H1 (cell line): ENCODE measurements at regions of chr14 and their contacts with region 1.

Region 1: GRCh38 chr14:96275177-96276112 is 19.4 kb downstream of the BDKRB1 start:
- DNase-seq: peak in 1 of 2 experiments; percentile 92
- H3K4me3 ChIP-seq: no peak overlapping the region
- H3K27ac ChIP-seq: no peak overlapping the region
- H3K4me1 ChIP-seq: peaks cover 0 to 6% (median 2%) of the 10 kb centered on the region in 4 experiments; a peak in 2 of 7 replicates
- H3K27me3 ChIP-seq: no peaks in the 10 kb centered on the region
- CTCF ChIP-seq: peak; percentile 91 to 93 (median 93)
- EP300 ChIP-seq: no peak
- POLR2A ChIP-seq: no peak
- RAD21 ChIP-seq: peak; percentile 94

Region 2: GRCh38 chr14:96204151-96205058 is 71.0 kb before region 1 on chr14 and contains the start of gene BDKRB2:
- CTCF ChIA-PET with region 1: no interaction called
- POLR2A ChIA-PET with region 1: no interaction called
- DNase-seq: peak; percentile 17 to 69
- H3K4me3 ChIP-seq: peak within 1 kb of the TSS; percentile 25 to 63 (median 44)
- H3K27ac ChIP-seq: no peak within 1 kb of the TSS
- H3K4me1 ChIP-seq: peaks cover 0 to 22% (median 5%) of the 10 kb centered on the region in 4 experiments; a peak in 5 of 7 replicates
- H3K27me3 ChIP-seq: peaks cover 0 to 22% (median 19%) of the 10 kb centered on the region in 4 experiments; a peak in 6 of 7 replicates
- CTCF ChIP-seq: no peak
- EP300 ChIP-seq: no peak
- POLR2A ChIP-seq: no peak
- RAD21 ChIP-seq: no peak
- total RNA-seq, gene BDKRB2: 0.13 TPM in 2 replicates

Region 3: GRCh38 chr14:96246535-96246839 is 29.0 kb before region 1 on chr14:
- CTCF ChIA-PET with region 1: interaction called, 11 read pairs
- POLR2A ChIA-PET with region 1: no interaction called
- DNase-seq: no peak
- H3K4me3 ChIP-seq: no peak overlapping the region
- H3K27ac ChIP-seq: no peak overlapping the region
- H3K4me1 ChIP-seq: peaks cover 0 to 4% (median 2%) of the 10 kb centered on the region in 4 experiments; a peak in 2 of 7 replicates
- H3K27me3 ChIP-seq: no peaks in the 10 kb centered on the region
- CTCF ChIP-seq: no peak
- EP300 ChIP-seq: no peak
- POLR2A ChIP-seq: no peak
- RAD21 ChIP-seq: no peak

Region 4: GRCh38 chr14:96252999-96253539 is 22.4 kb before region 1 on chr14:
- CTCF ChIA-PET with region 1: interaction called, 11 read pairs
- POLR2A ChIA-PET with region 1: no interaction called
- DNase-seq: peak in 1 of 2 experiments; percentile 21
- H3K4me3 ChIP-seq: no peak overlapping the region
- H3K27ac ChIP-seq: no peak overlapping the region
- H3K4me1 ChIP-seq: peaks cover 0 to 4% (median 2%) of the 10 kb centered on the region in 4 experiments; a peak in 3 of 7 replicates
- H3K27me3 ChIP-seq: no peaks in the 10 kb centered on the region
- CTCF ChIP-seq: no peak
- EP300 ChIP-seq: no peak
- POLR2A ChIP-seq: no peak
- RAD21 ChIP-seq: no peak

Region 5: DNA sequence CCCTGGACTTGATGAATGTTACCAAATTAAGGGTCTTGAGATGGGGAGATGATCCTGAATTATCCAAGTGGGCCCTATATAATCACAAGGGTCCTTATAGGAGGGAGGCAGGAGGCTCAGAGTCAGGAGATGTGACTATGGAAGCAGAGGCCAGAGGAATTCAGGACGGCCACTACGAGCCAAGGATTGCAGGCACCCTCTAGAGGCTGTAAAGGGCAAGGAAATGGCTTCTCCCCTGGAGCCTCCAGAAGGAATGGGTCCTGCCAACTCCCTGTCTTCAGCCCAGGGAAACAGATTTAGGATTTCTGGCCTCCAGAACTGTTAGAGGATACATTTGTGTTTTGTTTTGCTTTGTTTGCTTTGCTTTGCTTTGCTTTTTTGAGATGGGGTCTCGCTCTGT is 10.6 kb before region 1 on chr14:
- CTCF ChIA-PET with region 1: interaction called, 46 read pairs
- POLR2A ChIA-PET with region 1: no interaction called
- DNase-seq: no peak
- H3K4me3 ChIP-seq: no peak overlapping the region
- H3K27ac ChIP-seq: no peak overlapping the region
- H3K4me1 ChIP-seq: no peaks in the 10 kb centered on the region
- H3K27me3 ChIP-seq: no peaks in the 10 kb centered on the region
- CTCF ChIP-seq: peak; percentile 54 to 69 (median 66)
- EP300 ChIP-seq: no peak
- POLR2A ChIP-seq: no peak
- RAD21 ChIP-seq: peak; percentile 71 to 78

Region 6: GRCh38 chr14:96285667-96286066 is 10.2 kb after region 1 on chr14:
- CTCF ChIA-PET with region 1: interaction called, 18 read pairs
- POLR2A ChIA-PET with region 1: no interaction called
- DNase-seq: no peak
- H3K4me3 ChIP-seq: no peak overlapping the region
- H3K27ac ChIP-seq: no peak overlapping the region
- H3K4me1 ChIP-seq: no peaks in the 10 kb centered on the region
- H3K27me3 ChIP-seq: no peaks in the 10 kb centered on the region
- CTCF ChIP-seq: no peak
- EP300 ChIP-seq: no peak
- POLR2A ChIP-seq: no peak
- RAD21 ChIP-seq: no peak

Region 7: DNA sequence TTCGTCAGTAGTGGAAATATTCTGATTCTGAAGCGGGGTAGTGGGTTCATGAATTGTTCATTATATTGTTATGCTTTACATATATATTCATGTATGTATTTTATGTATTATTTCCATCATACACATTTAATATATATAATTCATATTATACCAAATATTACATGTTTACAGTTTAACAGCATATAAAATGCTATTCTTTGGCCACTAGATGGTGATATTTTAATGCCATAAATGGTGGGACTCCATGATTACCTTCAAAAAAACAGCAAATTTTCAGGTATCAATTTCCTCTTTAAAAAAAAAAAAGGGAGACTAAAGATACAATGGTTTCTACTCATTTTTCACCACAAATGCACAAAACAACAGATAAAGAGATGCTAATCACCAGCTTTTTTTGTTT is 21.6 kb after region 1 on chr14:
- CTCF ChIA-PET with region 1: interaction called, 10 read pairs
- POLR2A ChIA-PET with region 1: no interaction called
- DNase-seq: no peak
- H3K4me3 ChIP-seq: no peak overlapping the region
- H3K27ac ChIP-seq: no peak overlapping the region
- H3K4me1 ChIP-seq: no peaks in the 10 kb centered on the region
- H3K27me3 ChIP-seq: no peaks in the 10 kb centered on the region
- CTCF ChIP-seq: peak in 1 of 3 experiments; percentile 20; a peak in 2 of 4 replicates
- EP300 ChIP-seq: no peak
- POLR2A ChIP-seq: no peak
- RAD21 ChIP-seq: peak in 1 of 2 experiments; percentile 47; a peak in 3 of 4 replicates